ENCODE measurements at regions of chr5 and their contacts with region 1.

Region 1: GRCh38 chr5:16456103-16456832 is 9.3 kb downstream of the ZNF622 start:
- DNase-seq: peak in 2 of 5 donors; percentile 35 to 57
- ATAC-seq: peak in 3 of 4 donors; percentile 62 to 76 (median 63)
- H3K4me3 ChIP-seq: no peak overlapping the region
- H3K27ac ChIP-seq: peak overlapping the region in 10 of 12 donors; percentile 6 to 95 (median 50)
- H3K4me1 ChIP-seq: peaks cover 2 to 73% (median 52%) of the 10 kb centered on the region in 12 donors
- H3K27me3 ChIP-seq: no peaks in the 10 kb centered on the region
- CTCF ChIP-seq: peak; percentile 59 to 79 (median 70)
- POLR2A ChIP-seq: no peak

Region 2: DNA sequence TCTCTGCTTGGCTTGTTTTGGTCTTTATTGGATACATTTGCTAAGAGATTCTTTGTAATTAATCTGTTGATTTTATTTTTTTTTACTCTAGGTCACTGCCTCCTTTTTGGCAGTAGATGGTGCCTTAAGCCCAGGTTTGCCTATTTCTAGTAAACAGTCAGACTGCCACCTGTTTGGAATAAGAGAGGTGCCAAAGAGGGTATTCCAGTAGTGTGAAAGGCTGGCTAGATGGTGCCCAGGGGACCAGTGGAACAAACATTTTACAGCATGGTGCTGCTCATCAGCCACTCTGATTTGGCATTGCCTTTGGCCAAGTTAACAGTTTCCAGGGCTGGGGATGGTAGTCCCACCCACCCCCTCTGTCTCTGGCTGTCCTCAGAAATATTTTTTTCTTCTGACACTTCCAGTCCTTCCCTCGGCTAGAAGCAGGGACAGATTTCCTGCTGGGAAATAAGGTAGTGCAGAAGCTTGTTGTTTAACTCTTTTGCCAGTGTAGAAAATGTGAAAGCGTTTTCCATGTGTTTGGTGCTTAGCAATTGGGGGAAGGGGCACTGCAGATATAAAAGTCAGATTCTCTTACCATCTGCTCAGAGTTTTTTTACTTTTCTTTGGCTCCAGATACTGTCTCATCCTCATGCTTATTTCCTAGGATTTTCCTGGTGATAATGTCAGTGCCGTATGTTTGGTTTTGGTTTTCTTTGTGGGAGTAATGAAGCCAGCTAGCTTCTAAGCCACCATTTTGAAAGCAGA is 992.9 kb before region 1 on chr5:
- intact Hi-C with region 1: loop called in 1 of 10 experiments (anchors 10 kb)
- DNase-seq: no peak
- ATAC-seq: no peak
- H3K4me3 ChIP-seq: no peak overlapping the region
- H3K27ac ChIP-seq: no peak overlapping the region
- H3K4me1 ChIP-seq: no peaks in the 10 kb centered on the region
- H3K27me3 ChIP-seq: no peaks in the 10 kb centered on the region
- CTCF ChIP-seq: peak in 11 of 12 donors; percentile 13 to 58 (median 52)
- POLR2A ChIP-seq: no peak

Region 3: GRCh38 chr5:16152601-16153568 is 303.4 kb before region 1 on chr5:
- intact Hi-C with region 1: loop called in 4 of 10 experiments (anchors 5 kb)
- DNase-seq: no peak
- ATAC-seq: no peak
- H3K4me3 ChIP-seq: peak overlapping the region in 6 of 12 donors; percentile 0 to 35 (median 14)
- H3K27ac ChIP-seq: peak overlapping the region in 8 of 12 donors; percentile 25 to 69 (median 39)
- H3K4me1 ChIP-seq: peaks cover 0 to 24% (median 0%) of the 10 kb centered on the region in 12 donors
- H3K27me3 ChIP-seq: no peaks in the 10 kb centered on the region
- CTCF ChIP-seq: no peak
- POLR2A ChIP-seq: no peak

Region 4: GRCh38 chr5:16178745-16179372 is 277.4 kb before region 1 on chr5:
- intact Hi-C with region 1: loop called in 4 of 10 experiments (anchors 5 kb)
- DNase-seq: peak; percentile 60 to 85 (median 78)
- ATAC-seq: peak in 3 of 4 donors; percentile 94 to 98 (median 95)
- H3K4me3 ChIP-seq: peak overlapping the region in 11 of 12 donors; percentile 17 to 55 (median 43)
- H3K27ac ChIP-seq: no peak overlapping the region
- H3K4me1 ChIP-seq: peaks cover 0 to 10% (median 0%) of the 10 kb centered on the region in 12 donors
- H3K27me3 ChIP-seq: peaks cover 5 to 48% (median 21%) of the 10 kb centered on the region in 9 donors
- CTCF ChIP-seq: peak in 3 of 12 donors; percentile 13 to 26 (median 24)
- POLR2A ChIP-seq: no peak

Region 5: GRCh38 chr5:16418471-16418922 is 37.8 kb before region 1 on chr5:
- intact Hi-C with region 1: loop called in 1 of 10 experiments (anchors 5 kb)
- DNase-seq: peak in 4 of 5 donors; percentile 45 to 76 (median 68)
- ATAC-seq: peak; percentile 95 to 97 (median 96)
- H3K4me3 ChIP-seq: no peak overlapping the region
- H3K27ac ChIP-seq: peak overlapping the region in 9 of 12 donors; percentile 54 to 82 (median 71)
- H3K4me1 ChIP-seq: peaks cover 0 to 9% (median 0%) of the 10 kb centered on the region in 12 donors
- H3K27me3 ChIP-seq: no peaks in the 10 kb centered on the region
- CTCF ChIP-seq: no peak
- POLR2A ChIP-seq: no peak

Region 6: DNA sequence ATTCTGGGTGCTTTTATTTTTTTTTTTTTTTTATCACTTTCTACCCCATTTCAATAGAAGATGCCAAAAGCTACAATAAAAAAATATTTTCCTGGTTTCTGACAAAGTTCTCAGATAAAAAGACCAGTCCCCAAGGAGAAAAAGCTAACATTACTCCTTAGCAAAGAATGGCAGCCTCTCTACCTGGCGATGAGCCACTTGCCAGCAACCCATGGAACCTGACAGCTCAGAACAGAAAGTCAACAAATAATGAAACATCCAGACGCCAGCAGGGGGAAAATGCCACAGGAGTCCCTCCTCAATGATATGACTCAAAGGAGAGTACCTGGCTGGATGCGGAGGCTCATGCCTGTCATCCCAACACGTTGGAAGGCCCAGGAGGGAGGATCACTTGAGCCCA is 356.6 kb after region 1 on chr5:
- intact Hi-C with region 1: no loop called
- DNase-seq: no peak
- ATAC-seq: no peak
- H3K4me3 ChIP-seq: no peak overlapping the region
- H3K27ac ChIP-seq: no peak overlapping the region
- H3K4me1 ChIP-seq: peaks cover 0 to 15% (median 11%) of the 10 kb centered on the region in 12 donors
- H3K27me3 ChIP-seq: no peaks in the 10 kb centered on the region
- CTCF ChIP-seq: no peak
- POLR2A ChIP-seq: no peak

Region 7: DNA sequence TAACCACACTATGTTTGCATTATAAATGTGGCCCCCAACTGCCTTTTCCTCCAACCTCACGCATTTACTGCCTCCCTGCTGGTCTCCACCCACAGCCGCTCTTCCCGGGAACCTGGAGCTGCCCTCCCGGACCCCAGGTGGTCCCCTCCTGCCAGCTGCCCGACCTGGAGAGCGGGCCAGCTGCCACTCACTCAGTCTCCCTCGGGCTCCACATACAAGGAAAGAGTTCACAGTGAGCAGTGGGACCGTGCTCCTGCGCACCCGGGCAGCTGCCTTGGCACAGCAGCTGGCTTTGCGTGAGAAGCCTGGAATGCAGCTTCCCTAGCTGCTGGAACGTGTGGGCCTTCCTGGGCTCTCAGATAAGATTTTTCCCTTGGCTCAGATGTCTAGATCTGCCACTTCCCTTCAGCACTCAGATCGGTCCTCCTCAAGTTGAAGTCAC is 410.5 kb after region 1 on chr5:
- intact Hi-C with region 1: no loop called
- DNase-seq: no peak
- ATAC-seq: peak in 3 of 4 donors; percentile 34 to 50 (median 44)
- H3K4me3 ChIP-seq: no peak overlapping the region
- H3K27ac ChIP-seq: no peak overlapping the region
- H3K4me1 ChIP-seq: peaks cover 0 to 5% (median 0%) of the 10 kb centered on the region in 12 donors
- H3K27me3 ChIP-seq: no peaks in the 10 kb centered on the region
- CTCF ChIP-seq: no peak
- POLR2A ChIP-seq: no peak

Measured in heart left ventricle (tissue), 16 donors.